ENCODE measurements at regions of chr2 and their contacts with region 1.

Region 1: DNA sequence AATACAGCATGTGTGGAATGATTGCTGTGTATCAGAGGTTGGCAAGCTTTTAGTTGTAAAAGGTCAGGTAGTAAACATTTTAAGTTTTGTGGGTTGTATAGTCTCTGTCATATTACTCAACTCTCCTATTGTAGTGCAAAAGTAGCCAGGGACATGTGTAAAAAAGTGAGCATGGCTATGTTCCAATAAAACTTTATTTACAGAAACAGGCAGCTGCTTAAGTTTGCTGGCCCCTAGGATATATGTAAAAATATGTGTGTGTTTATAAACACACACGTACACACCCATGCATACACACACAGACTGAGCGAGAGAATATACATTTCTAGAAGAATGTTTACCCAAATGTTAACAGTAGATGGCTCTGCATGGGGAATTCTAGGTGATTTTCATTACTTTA is 33.0 kb downstream of the MSTN start:
- DNase-seq: no peak
- H3K4me3 ChIP-seq: no peak overlapping the region
- H3K27ac ChIP-seq: no peak overlapping the region
- H3K4me1 ChIP-seq: no peaks in the 10 kb centered on the region
- H3K27me3 ChIP-seq: peaks cover 0 to 2% (median 0%) of the 10 kb centered on the region in 4 donors
- CTCF ChIP-seq: no peak
- POLR2A ChIP-seq: no peak

Region 2: GRCh38 chr2:190069936-190070696 is 40.6 kb after region 1 on chr2:
- intact Hi-C with region 1: loop called (anchors 5 kb)
- DNase-seq: no peak
- H3K4me3 ChIP-seq: no peak overlapping the region
- H3K27ac ChIP-seq: no peak overlapping the region
- H3K4me1 ChIP-seq: no peaks in the 10 kb centered on the region
- H3K27me3 ChIP-seq: no peaks in the 10 kb centered on the region
- CTCF ChIP-seq: peak in 5 of 6 experiments; percentile 27 to 67 (median 44)
- POLR2A ChIP-seq: no peak

Region 3: DNA sequence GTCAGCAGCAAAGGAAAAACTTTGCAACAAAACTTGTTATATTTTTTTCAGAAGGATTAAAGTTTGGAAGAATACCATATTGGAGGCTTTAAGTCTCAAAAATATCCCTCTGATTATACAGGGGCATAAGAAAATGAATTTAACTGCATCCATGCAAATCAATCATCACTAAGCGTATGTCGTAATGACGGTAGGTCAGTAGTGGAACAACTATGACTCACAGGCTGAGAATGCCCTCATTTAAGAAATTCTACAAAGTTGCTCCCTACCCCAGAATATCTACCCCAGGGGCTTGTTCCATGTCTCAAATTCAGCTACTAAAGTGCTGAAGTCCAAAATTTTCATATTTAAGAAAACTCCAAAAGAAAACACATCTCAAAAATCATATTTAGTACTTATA is 606.8 kb after region 1 on chr2:
- intact Hi-C with region 1: no loop called
- DNase-seq: no peak
- H3K4me3 ChIP-seq: no peak overlapping the region
- H3K27ac ChIP-seq: peak overlapping the region; percentile 57 to 78 (median 67)
- H3K4me1 ChIP-seq: peaks cover 20 to 28% (median 25%) of the 10 kb centered on the region in 3 donors
- H3K27me3 ChIP-seq: no peaks in the 10 kb centered on the region
- CTCF ChIP-seq: no peak
- POLR2A ChIP-seq: no peak